ENCODE measurements at regions of chr3 and their contacts with region 1.

Region 1: GRCh38 chr3:49929331-49930240 is at the start of gene MON1A:
- DNase-seq: peak; percentile 79 to 95
- H3K4me3 ChIP-seq: peak within 1 kb of the TSS; percentile 81
- H3K27ac ChIP-seq: peak within 1 kb of the TSS; percentile 33; the same call in 1 of the 2 replicates
- H3K4me1 ChIP-seq: peaks cover 11% of the 10 kb centered on the region
- H3K27me3 ChIP-seq: no peaks in the 10 kb centered on the region
- CTCF ChIP-seq: peak; percentile 45; the same call in 1 of the 2 replicates
- total RNA-seq, gene MON1A: 4.8 and 5.5 TPM in 2 replicates

Region 2: GRCh38 chr3:49899815-49900214 is 29.8 kb before region 1 on chr3:
- CTCF ChIA-PET with region 1: no interaction called
- POLR2A ChIA-PET with region 1: interaction called, 6 read pairs
- intact Hi-C with region 1: loop called (anchors 1 kb)
- DNase-seq: no peak
- H3K4me3 ChIP-seq: peak overlapping the region; percentile 61
- H3K27ac ChIP-seq: peak overlapping the region; percentile 95
- H3K4me1 ChIP-seq: peaks cover 29% of the 10 kb centered on the region
- H3K27me3 ChIP-seq: no peaks in the 10 kb centered on the region
- CTCF ChIP-seq: no peak; the same call in 1 of the 2 replicates

Region 3: GRCh38 chr3:49939858-49940666 is 10.5 kb after region 1 on chr3 and contains the start of gene RBM6:
- CTCF ChIA-PET with region 1: interaction called, 12 read pairs
- POLR2A ChIA-PET with region 1: interaction called, 6 read pairs
- intact Hi-C with region 1: loop called (anchors 1 kb)
- DNase-seq: peak; percentile 93 to 95
- H3K4me3 ChIP-seq: peak within 1 kb of the TSS; percentile 99
- H3K27ac ChIP-seq: peak within 1 kb of the TSS; percentile 72
- H3K4me1 ChIP-seq: peaks cover 8% of the 10 kb centered on the region; the same call in 1 of the 2 replicates
- H3K27me3 ChIP-seq: no peaks in the 10 kb centered on the region
- CTCF ChIP-seq: no peak
- total RNA-seq, gene RBM6: 70.2 and 72.0 TPM in 2 replicates

Region 4: DNA sequence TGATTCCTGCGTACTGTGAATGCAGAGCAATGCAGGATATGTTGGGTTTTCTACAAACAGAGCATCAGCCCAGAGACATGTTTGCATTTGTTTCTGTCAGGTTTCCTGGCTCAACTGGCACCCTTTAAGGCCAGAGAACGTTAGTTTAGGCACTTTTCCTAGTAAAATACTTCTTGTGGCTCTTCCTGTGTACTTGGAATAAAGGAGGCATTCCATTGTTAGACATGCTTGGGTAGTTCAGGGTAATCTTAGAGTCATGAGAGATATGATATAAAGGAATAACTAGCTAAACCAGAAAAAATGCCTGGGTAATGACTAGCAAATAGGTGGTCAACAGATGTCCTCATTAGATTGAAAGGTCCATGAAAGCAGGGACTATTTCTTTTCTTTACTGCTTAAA is 98.8 kb after region 1 on chr3:
- CTCF ChIA-PET with region 1: interaction called, 5 read pairs
- POLR2A ChIA-PET with region 1: interaction called, 12 read pairs
- intact Hi-C with region 1: no loop called
- DNase-seq: peak in 1 of 2 experiments; percentile 63
- H3K4me3 ChIP-seq: no peak overlapping the region
- H3K27ac ChIP-seq: 0 out of 2 replicates have a peak overlapping the region, but pooled peaks have one; percentile 20
- H3K4me1 ChIP-seq: 0 out of 2 replicates have a peak, but pooled peaks cover 15% of the 10 kb centered on the region
- H3K27me3 ChIP-seq: no peaks in the 10 kb centered on the region
- CTCF ChIP-seq: no peak

Region 5: GRCh38 chr3:50100956-50101845 is 171.6 kb after region 1 on chr3:
- CTCF ChIA-PET with region 1: no interaction called
- POLR2A ChIA-PET with region 1: interaction called, 25 read pairs
- intact Hi-C with region 1: no loop called
- DNase-seq: no peak
- H3K4me3 ChIP-seq: no peak overlapping the region
- H3K27ac ChIP-seq: no peak overlapping the region
- H3K4me1 ChIP-seq: no peaks in the 10 kb centered on the region
- H3K27me3 ChIP-seq: no peaks in the 10 kb centered on the region
- CTCF ChIP-seq: no peak

Measured in PC-9 (cell line).